AG04449 (cell line): ENCODE measurements at regions of chr2 and their contacts with region 1.

Region 1: GRCh38 chr2:18520451-18521425 is 39.7 kb downstream of the RDH14 start:
- DNase-seq: no peak
- H3K4me3 ChIP-seq: no peak overlapping the region
- CTCF ChIP-seq: peak; percentile 84

Region 2: GRCh38 chr2:18387441-18388206 is 133.1 kb before region 1 on chr2:
- CTCF ChIA-PET with region 1: interaction called, 15 read pairs
- POLR2A ChIA-PET with region 1: no interaction called
- DNase-seq: no peak
- H3K4me3 ChIP-seq: no peak overlapping the region
- CTCF ChIP-seq: peak; percentile 91

Region 3: DNA sequence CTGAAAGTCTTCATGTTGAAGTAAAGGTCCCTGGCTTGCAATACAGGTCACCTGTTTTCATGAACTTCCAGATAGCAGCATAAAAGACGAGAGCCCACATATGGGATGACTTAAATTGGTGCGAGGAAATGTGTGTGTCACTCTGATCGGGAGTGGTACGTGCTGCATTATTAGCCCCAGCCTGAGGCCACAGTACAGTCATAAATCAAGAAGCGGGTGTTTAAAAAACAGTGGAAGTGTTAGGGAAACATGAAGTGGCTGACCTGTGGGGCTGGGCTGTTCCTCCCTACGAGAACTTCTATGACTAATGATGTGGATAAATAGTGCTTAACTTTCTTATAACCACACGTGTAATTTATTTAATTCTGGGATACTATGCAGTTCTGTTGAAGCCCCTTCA is 15.4 kb after region 1 on chr2:
- CTCF ChIA-PET with region 1: interaction called, 64 read pairs
- POLR2A ChIA-PET with region 1: no interaction called
- DNase-seq: no peak
- H3K4me3 ChIP-seq: no peak overlapping the region
- CTCF ChIP-seq: no peak

Region 4: DNA sequence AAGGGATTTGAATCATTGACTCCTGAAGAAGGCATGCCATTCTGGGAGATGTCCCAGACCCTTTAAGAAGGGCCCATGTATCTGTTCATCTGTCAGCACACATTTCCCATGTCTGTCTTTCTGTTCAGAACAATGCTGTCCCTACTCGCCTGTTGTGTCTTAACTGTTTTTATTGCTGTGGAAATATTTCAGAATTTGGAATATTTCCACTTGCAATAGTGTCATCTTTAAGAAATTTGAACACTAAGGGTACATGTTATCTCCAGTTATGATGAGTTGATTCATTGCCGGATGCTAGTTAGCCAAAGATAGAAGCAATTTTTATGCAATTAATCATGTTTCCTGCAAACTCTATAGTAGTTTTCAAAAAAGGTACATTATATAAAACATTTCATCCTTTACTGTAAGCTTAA is 105.5 kb after region 1 on chr2:
- CTCF ChIA-PET with region 1: interaction called, 12 read pairs
- POLR2A ChIA-PET with region 1: interaction called, 3 read pairs
- DNase-seq: no peak
- H3K4me3 ChIP-seq: no peak overlapping the region
- CTCF ChIP-seq: no peak

Region 5: DNA sequence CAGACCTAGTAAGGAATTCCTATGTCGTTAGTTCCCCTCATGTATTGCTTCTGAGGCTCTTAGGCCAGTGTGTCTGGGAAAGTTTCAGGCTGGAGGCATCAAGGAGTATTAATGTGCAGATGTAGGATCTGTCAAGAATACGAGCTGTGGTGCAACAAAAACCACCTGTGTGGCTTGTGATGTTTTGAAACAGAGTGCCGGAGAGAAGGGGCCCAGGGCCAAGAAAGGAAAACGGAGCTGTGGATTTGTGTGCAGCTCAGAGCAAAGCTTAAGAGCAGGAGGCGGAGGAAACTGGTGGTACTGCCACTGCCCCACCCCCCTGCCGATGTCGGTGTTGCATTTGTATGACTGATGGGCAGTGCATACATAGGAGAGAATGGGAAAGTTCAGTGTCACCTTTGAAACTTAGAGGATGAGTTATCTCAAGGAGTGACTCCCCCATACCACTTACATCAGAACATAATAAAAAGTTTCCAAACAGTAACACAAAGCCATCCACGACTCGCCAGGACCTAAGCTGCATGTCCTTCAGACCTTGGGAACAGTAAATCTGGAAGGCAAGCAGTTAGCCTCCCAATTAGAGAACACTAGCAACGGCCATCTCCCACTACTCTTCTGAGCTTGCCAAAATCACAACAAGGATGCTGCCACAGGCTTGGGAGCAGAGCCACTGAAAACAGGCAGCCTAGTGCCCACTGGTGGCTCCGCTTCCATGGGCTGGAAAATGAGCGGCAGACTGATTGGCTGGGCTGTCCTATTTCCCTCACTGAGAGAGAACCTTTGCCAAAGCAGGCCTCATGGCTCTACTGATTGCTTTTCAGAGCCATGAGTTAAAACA is 221.4 kb after region 1 on chr2:
- CTCF ChIA-PET with region 1: interaction called, 32 read pairs
- POLR2A ChIA-PET with region 1: no interaction called
- DNase-seq: no peak
- H3K4me3 ChIP-seq: no peak overlapping the region
- CTCF ChIP-seq: peak; percentile 24

Region 6: GRCh38 chr2:18855027-18855426 is 334.3 kb after region 1 on chr2:
- CTCF ChIA-PET with region 1: interaction called, 13 read pairs
- POLR2A ChIA-PET with region 1: no interaction called
- DNase-seq: no peak
- H3K4me3 ChIP-seq: no peak overlapping the region
- CTCF ChIP-seq: peak; percentile 39

Region 7: DNA sequence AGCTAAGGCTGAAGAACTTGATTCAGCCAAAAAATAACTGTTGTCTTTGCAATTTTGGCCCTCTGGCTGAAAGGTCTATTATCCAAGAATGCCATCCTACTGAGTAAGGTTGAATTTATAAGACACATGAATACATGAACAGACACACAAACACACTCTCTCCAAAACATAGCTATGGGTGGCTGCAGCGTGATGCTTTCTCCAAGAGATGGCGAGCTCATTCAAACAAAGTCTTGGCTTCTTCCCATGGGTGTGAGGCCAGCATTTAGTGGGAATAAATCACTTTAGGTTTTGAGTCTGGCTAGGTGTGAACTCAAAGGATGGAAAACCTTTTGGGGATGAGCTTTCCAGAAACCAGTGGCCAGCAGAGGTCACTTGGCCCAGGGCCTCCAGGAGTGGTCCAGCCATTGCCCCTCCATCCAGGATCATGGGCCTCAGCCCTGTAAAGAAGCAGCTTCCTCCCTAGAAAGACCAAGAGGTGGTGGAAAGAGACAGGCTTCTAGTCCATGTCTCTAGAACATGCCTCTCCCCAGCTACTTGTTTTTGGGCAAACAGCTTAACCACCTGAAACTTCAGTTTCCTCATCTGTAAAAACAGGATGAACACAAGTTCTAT is 848.7 kb after region 1 on chr2:
- CTCF ChIA-PET with region 1: interaction called, 14 read pairs
- POLR2A ChIA-PET with region 1: no interaction called
- DNase-seq: no peak
- H3K4me3 ChIP-seq: no peak overlapping the region
- CTCF ChIP-seq: peak; percentile 68